ENCODE measurements at regions of chr9 and their contacts with region 1.

Region 1: GRCh38 chr9:130042833-130043653 is at the start of gene FNBP1:
- DNase-seq: peak; percentile 88 to 89 (median 89)
- ATAC-seq: peak; percentile 91
- H3K4me3 ChIP-seq: peak within 1 kb of the TSS; percentile 90
- H3K4me1 ChIP-seq: peaks cover 16% of the 10 kb centered on the region
- CTCF ChIP-seq: no peak
- total RNA-seq, gene FNBP1: 40.9 to 176 (median 42.0) TPM

Region 2: DNA sequence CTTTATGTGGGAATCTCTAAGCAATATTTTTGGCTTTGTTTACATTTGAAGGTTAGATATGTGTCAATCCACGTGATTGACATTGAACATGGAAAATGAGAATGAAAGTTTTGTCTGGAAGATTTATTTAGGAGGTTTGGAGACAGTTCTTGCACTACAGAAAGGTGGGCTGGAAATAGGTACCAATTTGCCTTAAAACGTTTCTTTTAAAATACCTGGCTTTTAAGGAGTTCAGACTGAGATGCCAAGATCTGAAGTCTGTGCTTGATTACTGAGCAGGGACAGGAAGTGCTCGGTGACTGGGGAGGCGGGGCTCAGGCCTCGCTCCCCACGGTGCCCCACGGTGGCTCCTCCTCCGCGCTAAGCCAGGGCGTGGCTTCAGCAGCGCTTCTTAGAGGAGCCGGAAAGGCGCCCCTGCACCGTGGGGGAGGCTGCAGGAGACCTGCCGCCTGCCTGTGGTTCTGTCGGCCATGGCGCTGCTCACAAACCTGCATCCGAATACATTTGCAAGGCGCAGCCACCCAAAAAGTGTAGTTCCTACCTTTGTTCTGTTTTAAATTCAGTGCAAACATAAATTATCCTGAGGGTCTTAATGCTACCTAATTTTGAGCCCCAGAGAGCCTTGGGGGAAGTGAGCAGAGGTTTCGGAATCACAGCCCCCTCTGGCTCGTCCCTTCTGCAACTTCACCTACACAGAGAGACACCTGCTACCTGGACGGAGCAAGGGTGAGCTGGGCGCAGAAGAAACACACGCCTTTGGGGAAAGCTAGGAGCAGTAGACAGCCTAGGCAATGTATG is 158.6 kb before region 1 on chr9:
- intact Hi-C with region 1: loop called in 1 of 2 experiments (anchors 5 kb)
- DNase-seq: peak; percentile 96 to 98 (median 97)
- ATAC-seq: peak; percentile 81
- H3K4me3 ChIP-seq: no peak overlapping the region
- H3K4me1 ChIP-seq: peaks cover 24% of the 10 kb centered on the region
- CTCF ChIP-seq: no peak

Measured in mucosa of descending colon (tissue), 3 donors.